Thyroid gland (tissue), 4 donors: ENCODE measurements at regions of chr1 and their contacts with region 1.

Region 1: DNA sequence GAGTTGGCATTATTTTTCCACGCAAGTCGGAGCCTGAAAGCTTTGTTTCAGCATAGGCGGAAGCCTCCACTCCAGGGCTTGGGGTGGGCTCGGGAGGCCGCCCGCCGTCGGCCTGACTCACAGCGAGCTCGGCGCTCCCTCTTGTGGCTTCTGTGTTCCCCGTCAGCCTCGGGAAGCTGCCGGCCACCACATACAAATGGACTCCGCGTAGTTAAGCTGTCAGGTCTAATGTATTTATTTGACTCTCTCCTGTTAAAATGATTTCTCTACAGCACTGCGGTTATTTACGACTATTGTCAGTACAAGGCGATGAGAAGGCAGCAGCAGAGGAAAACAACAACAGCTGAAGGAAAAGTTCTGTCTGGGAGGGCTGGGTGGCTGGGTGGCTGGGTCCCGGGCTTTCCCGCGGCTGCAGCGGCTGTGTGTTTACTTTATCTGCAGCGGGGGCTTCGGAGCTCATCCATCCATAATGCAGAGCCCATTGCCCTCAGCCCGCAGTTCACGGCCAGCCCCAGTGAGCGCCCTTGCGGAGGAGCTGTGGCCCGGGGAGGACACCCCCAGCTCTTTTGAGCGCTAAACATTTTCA is 375.7 kb upstream of the CAMK1G start:
- DNase-seq: peak; percentile 64 to 68
- H3K4me3 ChIP-seq: no peak overlapping the region
- H3K27ac ChIP-seq: no peak overlapping the region
- H3K4me1 ChIP-seq: peaks cover 0 to 11% of the 10 kb centered on the region in 2 donors
- H3K27me3 ChIP-seq: no peaks in the 10 kb centered on the region
- CTCF ChIP-seq: peak; percentile 16 to 78 (median 52)
- POLR2A ChIP-seq: no peak

Region 2: GRCh38 chr1:209276321-209276720 is 68.5 kb after region 1 on chr1:
- intact Hi-C with region 1: no loop called
- DNase-seq: no peak
- H3K4me3 ChIP-seq: no peak overlapping the region
- H3K27ac ChIP-seq: no peak overlapping the region
- H3K4me1 ChIP-seq: no peaks in the 10 kb centered on the region
- H3K27me3 ChIP-seq: no peaks in the 10 kb centered on the region
- CTCF ChIP-seq: no peak
- POLR2A ChIP-seq: no peak

Region 3: GRCh38 chr1:209302779-209303568 is 95.2 kb after region 1 on chr1:
- intact Hi-C with region 1: no loop called
- DNase-seq: no peak
- H3K4me3 ChIP-seq: no peak overlapping the region
- H3K27ac ChIP-seq: peak overlapping the region in 1 of 3 donors; percentile 7
- H3K4me1 ChIP-seq: peaks cover 24 to 25% of the 10 kb centered on the region in 2 donors
- H3K27me3 ChIP-seq: no peaks in the 10 kb centered on the region
- CTCF ChIP-seq: no peak
- POLR2A ChIP-seq: no peak

Region 4: GRCh38 chr1:209354111-209354839 is 146.5 kb after region 1 on chr1:
- intact Hi-C with region 1: loop called (anchors 10 kb)
- DNase-seq: peak; percentile 87 to 88
- H3K4me3 ChIP-seq: no peak overlapping the region
- H3K27ac ChIP-seq: peak overlapping the region in 2 of 3 donors; percentile 40 to 48
- H3K4me1 ChIP-seq: peaks cover 6 to 8% of the 10 kb centered on the region in 2 donors
- H3K27me3 ChIP-seq: no peaks in the 10 kb centered on the region
- CTCF ChIP-seq: peak; percentile 39 to 86 (median 69)
- POLR2A ChIP-seq: no peak

Region 5: GRCh38 chr1:209435654-209436566 is 228.1 kb after region 1 on chr1:
- intact Hi-C with region 1: loop called (anchors 10 kb)
- DNase-seq: peak; percentile 84 to 86
- H3K4me3 ChIP-seq: no peak overlapping the region
- H3K27ac ChIP-seq: no peak overlapping the region
- H3K4me1 ChIP-seq: peaks cover 18 to 38% of the 10 kb centered on the region in 2 donors
- H3K27me3 ChIP-seq: no peaks in the 10 kb centered on the region
- CTCF ChIP-seq: peak; percentile 38 to 92 (median 78)
- POLR2A ChIP-seq: no peak